ENCODE measurements at regions of chr5 and their contacts with region 1.

Region 1: GRCh38 chr5:159504857-159505304 is 174.6 kb upstream of the IL12B start:
- DNase-seq: peak; percentile 35
- ATAC-seq: peak; percentile 74 to 94

Region 2: GRCh38 chr5:159451197-159452052 is 53.5 kb before region 1 on chr5:
- intact Hi-C with region 1: loop called in 1 of 2 experiments (anchors 5 kb)
- DNase-seq: peak; percentile 57
- ATAC-seq: peak; percentile 97

Region 3: DNA sequence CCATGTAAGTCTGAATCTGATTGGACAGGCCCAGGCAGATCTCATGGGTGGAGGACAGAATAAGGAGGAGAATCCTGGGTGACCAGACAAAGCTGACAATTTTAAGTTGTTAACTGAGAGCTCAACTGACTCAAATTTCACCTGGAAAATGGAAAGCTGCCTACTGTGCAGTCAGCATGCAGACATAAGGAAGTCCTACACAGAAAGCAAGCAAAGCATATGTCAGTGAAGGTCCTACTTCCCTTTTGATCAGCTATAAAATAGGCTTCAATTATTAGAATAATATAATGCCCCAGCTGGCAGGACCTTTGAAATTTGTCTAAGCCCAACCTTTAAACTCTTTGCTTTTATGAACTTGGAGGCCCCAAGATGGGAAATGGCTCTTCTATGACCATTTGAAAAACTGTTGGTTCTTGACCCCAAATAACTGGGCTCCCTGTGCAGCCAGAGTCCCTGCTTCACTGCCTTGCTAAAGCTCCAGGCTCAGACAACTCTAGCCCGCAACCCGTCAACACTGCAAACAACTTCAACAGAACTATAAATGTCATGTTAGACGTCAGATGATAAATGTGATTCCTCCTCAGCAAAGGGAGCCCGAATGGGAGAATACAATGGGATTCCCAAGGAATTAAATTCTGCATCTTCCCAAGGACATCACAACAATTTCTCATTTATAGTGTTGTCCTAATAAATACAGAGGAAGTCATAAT is 292.5 kb after region 1 on chr5:
- intact Hi-C with region 1: no loop called
- DNase-seq: no peak
- ATAC-seq: no peak